Activated CD4-positive, alpha-beta T cell treated with anti-CD3 and anti-CD28 coated beads for 36 hours (primary cell): ENCODE measurements at regions of chr5 and their contacts with region 1.

Region 1: GRCh38 chr5:32605766-32606152 is 20.4 kb downstream of the SUB1 start:
- DNase-seq: no peak
- ATAC-seq: peak; percentile 13
- H3K4me3 Mint-ChIP-seq: no peak overlapping the region
- H3K27ac Mint-ChIP-seq: peak overlapping the region; percentile 7
- H3K4me1 Mint-ChIP-seq: peaks cover 10% of the 10 kb centered on the region
- H3K27me3 Mint-ChIP-seq: no peaks in the 10 kb centered on the region

Region 2: GRCh38 chr5:32831630-32832029 is 225.9 kb after region 1 on chr5:
- CTCF ChIA-PET with region 1: no interaction called
- POLR2A ChIA-PET with region 1: no interaction called
- intact Hi-C with region 1: no loop called
- DNase-seq: no peak
- ATAC-seq: no peak
- H3K4me3 Mint-ChIP-seq: no peak overlapping the region
- H3K27ac Mint-ChIP-seq: no peak overlapping the region
- H3K4me1 Mint-ChIP-seq: no peaks in the 10 kb centered on the region
- H3K27me3 Mint-ChIP-seq: no peaks in the 10 kb centered on the region

Region 3: GRCh38 chr5:32842813-32843530 is 237.2 kb after region 1 on chr5:
- CTCF ChIA-PET with region 1: no interaction called
- POLR2A ChIA-PET with region 1: interaction called, 10 read pairs
- intact Hi-C with region 1: no loop called
- DNase-seq: peak; percentile 7
- ATAC-seq: no peak
- H3K4me3 Mint-ChIP-seq: no peak overlapping the region
- H3K27ac Mint-ChIP-seq: no peak overlapping the region
- H3K4me1 Mint-ChIP-seq: peaks cover 3% of the 10 kb centered on the region
- H3K27me3 Mint-ChIP-seq: no peaks in the 10 kb centered on the region